ENCODE measurements at regions of chr6 and their contacts with region 1.

Region 1: DNA sequence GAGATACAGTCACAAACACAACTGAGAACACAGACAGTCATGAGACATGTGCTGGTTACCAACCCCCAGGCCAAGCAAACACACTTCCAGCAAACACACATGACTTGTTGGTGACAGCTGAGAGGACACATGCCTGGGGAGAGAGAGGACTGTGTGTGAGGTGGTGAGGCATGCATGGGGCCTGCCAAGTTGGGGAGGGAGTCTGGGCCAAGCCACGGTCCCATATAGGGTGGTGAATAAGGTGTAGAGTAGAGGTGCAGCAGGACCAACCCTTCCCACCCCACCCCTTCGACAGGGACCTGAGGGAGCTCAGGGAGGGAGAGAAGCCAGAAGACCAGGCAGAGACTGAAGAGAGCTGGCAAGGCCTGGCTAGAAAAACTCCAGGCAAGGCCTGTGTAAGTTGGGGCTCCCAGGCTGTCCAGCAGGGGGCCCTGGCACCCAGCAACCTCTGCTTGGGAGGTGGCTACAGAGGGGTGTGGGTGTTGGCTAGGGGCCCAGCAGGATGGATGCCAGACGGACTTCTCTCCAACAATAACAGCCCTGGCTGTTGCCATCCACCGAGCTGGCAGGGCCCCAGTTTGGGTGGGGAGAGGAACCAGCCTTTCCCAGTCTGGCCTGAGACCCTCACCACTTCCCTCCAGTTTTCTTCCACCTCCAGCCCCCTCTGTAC is 2.0 kb upstream of the SLC29A1 start:
- DNase-seq: peak; percentile 71 to 92 (median 81)
- ATAC-seq: peak; percentile 65
- H3K4me3 ChIP-seq: no peak overlapping the region
- H3K27ac ChIP-seq: peak overlapping the region; percentile 48; the same call in 1 of the 3 replicates
- H3K4me1 ChIP-seq: peaks cover 73 to 88% of the 10 kb centered on the region in 2 experiments
- H3K27me3 ChIP-seq: no peaks in the 10 kb centered on the region
- CTCF ChIP-seq: peak; percentile 94 to 97 (median 94)
- EP300 ChIP-seq: no peak
- POLR2A ChIP-seq: no peak
- RAD21 ChIP-seq: peak; percentile 66 to 83

Region 2: GRCh38 chr6:44201638-44202303 is 19.7 kb before region 1 on chr6:
- CTCF ChIA-PET with region 1: no interaction called
- POLR2A ChIA-PET with region 1: interaction called, 11 read pairs
- in situ Hi-C with region 1: no loop called
- intact Hi-C with region 1: no loop called
- DNase-seq: peak; percentile 71 to 79 (median 73)
- ATAC-seq: peak; percentile 78
- H3K4me3 ChIP-seq: no peak overlapping the region
- H3K27ac ChIP-seq: peak overlapping the region; percentile 53; the same call in 2 of the 3 replicates
- H3K4me1 ChIP-seq: peaks cover 28 to 45% of the 10 kb centered on the region in 2 experiments
- H3K27me3 ChIP-seq: no peaks in the 10 kb centered on the region
- CTCF ChIP-seq: no peak
- EP300 ChIP-seq: no peak; the same call in 1 of the 2 replicates
- POLR2A ChIP-seq: 0 out of 2 replicates have a peak, but pooled peaks have one; percentile 39
- RAD21 ChIP-seq: no peak

Region 3: GRCh38 chr6:44211284-44211683 is 10.1 kb before region 1 on chr6:
- CTCF ChIA-PET with region 1: no interaction called
- POLR2A ChIA-PET with region 1: interaction called, 11 read pairs
- in situ Hi-C with region 1: no loop called
- intact Hi-C with region 1: no loop called
- DNase-seq: no peak
- ATAC-seq: no peak
- H3K4me3 ChIP-seq: no peak overlapping the region
- H3K27ac ChIP-seq: no peak overlapping the region
- H3K4me1 ChIP-seq: peaks cover 7 to 8% of the 10 kb centered on the region in 2 experiments; a peak in 4 of 5 replicates
- H3K27me3 ChIP-seq: no peaks in the 10 kb centered on the region
- CTCF ChIP-seq: no peak
- EP300 ChIP-seq: no peak
- POLR2A ChIP-seq: no peak
- RAD21 ChIP-seq: no peak

Region 4: GRCh38 chr6:44237813-44238433 is 16.5 kb after region 1 on chr6:
- CTCF ChIA-PET with region 1: interaction called, 6 read pairs
- POLR2A ChIA-PET with region 1: interaction called, 52 read pairs
- in situ Hi-C with region 1: no loop called
- intact Hi-C with region 1: loop called (anchors 2 kb)
- DNase-seq: peak; percentile 90 to 92 (median 90)
- ATAC-seq: peak; percentile 95
- H3K4me3 ChIP-seq: peak overlapping the region; percentile 50
- H3K27ac ChIP-seq: peak overlapping the region; percentile 79
- H3K4me1 ChIP-seq: peaks cover 16 to 26% of the 10 kb centered on the region in 2 experiments; a peak in 4 of 5 replicates
- H3K27me3 ChIP-seq: no peaks in the 10 kb centered on the region
- CTCF ChIP-seq: peak; percentile 93 to 98 (median 95)
- EP300 ChIP-seq: peak; percentile 8; the same call in 1 of the 2 replicates
- POLR2A ChIP-seq: peak; percentile 81
- RAD21 ChIP-seq: peak; percentile 78 to 86

Region 5: GRCh38 chr6:44257025-44257752 is 35.8 kb after region 1 on chr6 and contains the start of gene SLC35B2:
- CTCF ChIA-PET with region 1: no interaction called
- POLR2A ChIA-PET with region 1: interaction called, 8 read pairs
- in situ Hi-C with region 1: no loop called
- intact Hi-C with region 1: loop called (anchors 2 kb)
- DNase-seq: peak; percentile 92 to 94 (median 93)
- ATAC-seq: peak; percentile 71
- H3K4me3 ChIP-seq: peak within 1 kb of the TSS; percentile 81
- H3K27ac ChIP-seq: peak within 1 kb of the TSS; percentile 93
- H3K4me1 ChIP-seq: peaks cover 32 to 45% of the 10 kb centered on the region in 2 experiments; a peak in 4 of 5 replicates
- H3K27me3 ChIP-seq: no peaks in the 10 kb centered on the region
- CTCF ChIP-seq: peak; percentile 70 to 90 (median 78); a peak in 5 of 6 replicates
- EP300 ChIP-seq: peak; percentile 33
- POLR2A ChIP-seq: peak; percentile 75
- RAD21 ChIP-seq: peak in 1 of 2 experiments; percentile 57; a peak in 3 of 4 replicates
- polyA plus RNA-seq, gene SLC35B2: 14.5 to 19.2 TPM